MCF 10A (cell line): ENCODE measurements at regions of chr1 and their contacts with region 1.

Region 1: GRCh38 chr1:221741711-221742554 is at the start of gene DUSP10:
- DNase-seq: peak; percentile 100
- H3K4me3 Mint-ChIP-seq: no peak within 1 kb of the TSS
- H3K27ac Mint-ChIP-seq: no peak within 1 kb of the TSS
- H3K4me1 Mint-ChIP-seq: peaks cover 25% of the 10 kb centered on the region
- H3K27me3 Mint-ChIP-seq: no peaks in the 10 kb centered on the region
- CTCF ChIP-seq: no peak
- total RNA-seq, gene DUSP10: 15.9 and 22.0 TPM in 2 replicates

Region 2: GRCh38 chr1:221246628-221247415 is 495.1 kb before region 1 on chr1:
- CTCF ChIA-PET with region 1: no interaction called
- POLR2A ChIA-PET with region 1: no interaction called
- intact Hi-C with region 1: no loop called
- DNase-seq: no peak
- H3K4me3 Mint-ChIP-seq: no peak overlapping the region
- H3K27ac Mint-ChIP-seq: no peak overlapping the region
- H3K4me1 Mint-ChIP-seq: no peaks in the 10 kb centered on the region
- H3K27me3 Mint-ChIP-seq: no peaks in the 10 kb centered on the region
- CTCF ChIP-seq: no peak

Region 3: DNA sequence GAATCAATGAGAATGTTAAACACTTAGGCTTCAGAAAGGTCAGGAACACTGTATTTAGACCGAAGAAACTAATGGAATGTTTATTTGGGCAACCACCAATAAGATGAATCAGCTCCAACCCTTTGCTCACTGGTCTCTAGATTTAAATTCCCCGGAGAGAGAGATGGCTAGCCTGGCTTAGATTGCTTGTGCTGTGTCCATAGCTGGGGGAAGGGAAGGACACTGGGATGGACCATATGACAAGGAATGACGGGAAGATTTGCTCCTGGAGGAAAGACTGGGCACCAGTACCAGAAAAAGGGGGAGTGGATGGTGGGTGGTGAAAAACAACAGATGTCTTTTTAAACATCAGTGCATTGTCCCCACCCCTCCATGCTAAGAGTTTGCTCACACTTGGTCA is 426.6 kb before region 1 on chr1:
- CTCF ChIA-PET with region 1: no interaction called
- POLR2A ChIA-PET with region 1: no interaction called
- intact Hi-C with region 1: no loop called
- DNase-seq: peak; percentile 82
- H3K4me3 Mint-ChIP-seq: peak overlapping the region; percentile 7
- H3K27ac Mint-ChIP-seq: peak overlapping the region; percentile 59
- H3K4me1 Mint-ChIP-seq: peaks cover 29% of the 10 kb centered on the region
- H3K27me3 Mint-ChIP-seq: no peaks in the 10 kb centered on the region
- CTCF ChIP-seq: no peak

Region 4: GRCh38 chr1:221548942-221549341 is 193.0 kb before region 1 on chr1:
- CTCF ChIA-PET with region 1: interaction called, 25 read pairs
- POLR2A ChIA-PET with region 1: interaction called, 12 read pairs
- intact Hi-C with region 1: no loop called
- DNase-seq: no peak
- H3K4me3 Mint-ChIP-seq: no peak overlapping the region
- H3K27ac Mint-ChIP-seq: no peak overlapping the region
- H3K4me1 Mint-ChIP-seq: peaks cover under 1% of the 10 kb centered on the region
- H3K27me3 Mint-ChIP-seq: no peaks in the 10 kb centered on the region
- CTCF ChIP-seq: no peak

Region 5: GRCh38 chr1:221725735-221726672 is 15.9 kb before region 1 on chr1:
- CTCF ChIA-PET with region 1: interaction called, 16 read pairs
- POLR2A ChIA-PET with region 1: interaction called, 133 read pairs
- intact Hi-C with region 1: no loop called
- DNase-seq: peak; percentile 67
- H3K4me3 Mint-ChIP-seq: peak overlapping the region; percentile 47
- H3K27ac Mint-ChIP-seq: peak overlapping the region; percentile 97
- H3K4me1 Mint-ChIP-seq: peaks cover 53% of the 10 kb centered on the region
- H3K27me3 Mint-ChIP-seq: no peaks in the 10 kb centered on the region
- CTCF ChIP-seq: no peak

Region 6: DNA sequence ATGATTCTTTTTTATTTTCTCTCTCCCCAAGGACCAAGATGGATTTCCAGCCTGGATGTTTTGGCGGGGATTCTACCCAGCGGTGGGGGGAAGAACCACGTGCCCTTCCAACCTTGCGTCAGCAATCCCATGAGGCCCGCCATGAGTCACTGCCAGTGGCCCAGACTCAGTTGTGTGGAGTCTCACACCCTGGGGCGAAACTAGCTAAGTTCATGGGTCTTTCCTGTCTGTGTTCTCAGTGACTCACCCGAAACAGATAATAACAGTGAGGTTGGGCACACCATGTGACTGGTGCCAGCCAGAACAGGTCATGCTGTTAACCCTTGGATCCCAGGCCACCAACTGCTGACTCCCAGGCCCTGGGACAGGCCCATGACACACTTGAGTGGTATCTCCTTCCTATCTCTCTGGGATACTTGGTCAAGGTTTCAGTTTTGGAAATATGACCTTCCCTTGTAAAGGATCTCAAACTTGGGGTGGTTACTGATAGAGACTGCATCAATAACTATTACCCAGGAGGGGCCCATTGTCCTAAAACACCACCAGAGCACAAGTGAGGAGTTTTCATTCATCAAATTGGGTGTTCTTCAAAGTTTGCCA is 98.0 kb after region 1 on chr1:
- CTCF ChIA-PET with region 1: interaction called, 5 read pairs
- POLR2A ChIA-PET with region 1: interaction called, 64 read pairs
- intact Hi-C with region 1: loop called (anchors 1 kb)
- DNase-seq: peak; percentile 100
- H3K4me3 Mint-ChIP-seq: no peak overlapping the region
- H3K27ac Mint-ChIP-seq: peak overlapping the region; percentile 94
- H3K4me1 Mint-ChIP-seq: peaks cover 63% of the 10 kb centered on the region
- H3K27me3 Mint-ChIP-seq: no peaks in the 10 kb centered on the region
- CTCF ChIP-seq: no peak

Region 7: GRCh38 chr1:221994274-221994698 is 252.4 kb after region 1 on chr1:
- CTCF ChIA-PET with region 1: interaction called, 14 read pairs
- POLR2A ChIA-PET with region 1: interaction called, 17 read pairs
- intact Hi-C with region 1: loop called (anchors 5 kb)
- DNase-seq: no peak
- H3K4me3 Mint-ChIP-seq: no peak overlapping the region
- H3K27ac Mint-ChIP-seq: no peak overlapping the region
- H3K4me1 Mint-ChIP-seq: peaks cover 44% of the 10 kb centered on the region
- H3K27me3 Mint-ChIP-seq: no peaks in the 10 kb centered on the region
- CTCF ChIP-seq: no peak

Region 8: DNA sequence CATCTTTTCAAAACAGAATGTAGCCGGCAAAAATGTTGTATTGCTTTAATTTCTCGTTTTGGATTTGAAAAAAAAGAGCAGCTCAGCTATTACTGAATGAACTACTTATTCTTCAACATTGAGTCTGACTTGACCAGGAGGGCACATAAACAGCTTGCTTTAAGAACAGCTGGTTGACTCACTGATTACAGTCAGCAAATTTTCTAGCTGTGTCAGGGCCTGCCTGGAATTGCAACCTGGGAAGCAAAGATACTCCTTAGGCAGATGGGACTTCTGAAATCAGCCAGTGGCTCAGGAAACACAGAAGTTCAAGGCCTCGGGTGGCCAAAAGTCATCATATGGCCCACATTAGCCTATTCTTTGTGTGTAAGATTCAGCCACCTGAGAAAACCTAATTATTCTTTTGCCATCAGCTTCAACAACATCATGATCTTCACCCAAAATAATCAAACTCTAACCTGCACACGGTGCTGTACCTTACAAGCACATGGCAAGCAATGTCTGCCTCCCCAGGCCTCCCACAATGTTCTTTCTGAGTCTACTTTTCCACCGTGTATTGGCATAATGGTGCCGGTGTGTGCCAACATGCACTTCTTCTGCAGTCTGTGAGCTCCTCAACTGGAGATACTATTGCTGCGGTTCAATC is 498.7 kb after region 1 on chr1:
- CTCF ChIA-PET with region 1: interaction called, 3 read pairs
- POLR2A ChIA-PET with region 1: interaction called, 6 read pairs
- intact Hi-C with region 1: loop called (anchors 5 kb)
- DNase-seq: peak; percentile 64
- H3K4me3 Mint-ChIP-seq: no peak overlapping the region
- H3K27ac Mint-ChIP-seq: peak overlapping the region; percentile 57
- H3K4me1 Mint-ChIP-seq: peaks cover 24% of the 10 kb centered on the region
- H3K27me3 Mint-ChIP-seq: no peaks in the 10 kb centered on the region
- CTCF ChIP-seq: no peak